Dendritic cell treated with granulocyte-macrophage colony-stimulating factor and Interleukin-4, amounts not matched to agents 40 ng/mL and 50 ng/mL, for 4 days (primary cell): ENCODE measurements at regions of chr5 and their contacts with region 1.

Region 1: GRCh38 chr5:52356311-52356918 is 431.3 kb upstream of the ITGA1 start:
- H3K4me3 Mint-ChIP-seq: no peak overlapping the region
- H3K27ac Mint-ChIP-seq: no peak overlapping the region
- H3K4me1 Mint-ChIP-seq: no peaks in the 10 kb centered on the region
- H3K27me3 Mint-ChIP-seq: no peaks in the 10 kb centered on the region

Region 2: GRCh38 chr5:52328220-52328806 is 28.1 kb before region 1 on chr5:
- intact Hi-C with region 1: loop called (anchors 1 kb)
- H3K4me3 Mint-ChIP-seq: no peak overlapping the region
- H3K27ac Mint-ChIP-seq: no peak overlapping the region
- H3K4me1 Mint-ChIP-seq: no peaks in the 10 kb centered on the region
- H3K27me3 Mint-ChIP-seq: no peaks in the 10 kb centered on the region